ENCODE measurements at regions of chr1 and their contacts with region 1.

Region 1: DNA sequence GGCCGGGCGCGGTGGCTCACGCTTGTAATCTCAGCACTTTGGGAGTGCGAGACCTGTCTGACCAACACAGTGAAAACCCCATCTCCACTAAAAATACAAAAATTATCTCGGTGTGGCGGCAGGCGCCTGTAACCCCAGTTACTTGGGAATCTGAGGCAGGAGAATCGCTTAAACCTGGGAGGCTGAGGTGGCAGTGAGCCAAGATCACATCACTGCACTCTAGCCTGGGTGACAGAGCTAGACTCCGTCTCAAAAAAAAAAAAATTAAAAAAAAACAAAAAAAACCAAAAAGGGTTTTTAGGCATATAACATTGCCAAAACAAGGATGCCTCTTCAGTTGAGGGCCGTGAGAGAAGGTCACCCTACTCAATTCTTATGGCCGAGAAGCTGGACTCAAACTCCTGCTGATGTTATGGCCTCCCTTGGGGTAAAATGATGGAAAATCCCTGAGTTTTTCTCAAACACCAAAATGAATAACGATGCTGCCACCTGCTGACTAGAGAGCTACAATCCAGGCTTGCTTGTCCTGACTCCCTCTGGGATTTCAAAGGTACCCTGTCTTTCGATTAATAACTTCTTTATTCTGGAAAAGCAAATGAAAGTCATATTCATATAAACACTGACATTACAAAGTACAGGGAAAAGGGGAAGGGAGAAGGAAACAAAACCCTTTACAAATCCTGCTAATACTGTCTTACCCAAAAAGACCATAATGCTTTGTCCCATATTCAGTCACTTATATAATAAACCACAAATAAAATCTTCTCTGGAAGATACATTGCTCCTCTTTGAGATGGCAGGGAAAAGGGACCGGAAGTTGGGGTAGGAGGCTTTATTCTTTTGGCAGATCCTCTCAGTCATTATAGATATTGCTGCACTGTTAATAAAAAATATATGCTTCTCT is 10.7 kb downstream of the RAB42 start:
- DNase-seq: peak in 2 of 3 donors; percentile 53 to 67
- ATAC-seq: peak; percentile 72 to 78
- H3K4me3 ChIP-seq: no peak overlapping the region
- H3K27ac ChIP-seq: no peak overlapping the region
- H3K4me1 ChIP-seq: no peaks in the 10 kb centered on the region
- H3K27me3 ChIP-seq: no peaks in the 10 kb centered on the region

Region 2: DNA sequence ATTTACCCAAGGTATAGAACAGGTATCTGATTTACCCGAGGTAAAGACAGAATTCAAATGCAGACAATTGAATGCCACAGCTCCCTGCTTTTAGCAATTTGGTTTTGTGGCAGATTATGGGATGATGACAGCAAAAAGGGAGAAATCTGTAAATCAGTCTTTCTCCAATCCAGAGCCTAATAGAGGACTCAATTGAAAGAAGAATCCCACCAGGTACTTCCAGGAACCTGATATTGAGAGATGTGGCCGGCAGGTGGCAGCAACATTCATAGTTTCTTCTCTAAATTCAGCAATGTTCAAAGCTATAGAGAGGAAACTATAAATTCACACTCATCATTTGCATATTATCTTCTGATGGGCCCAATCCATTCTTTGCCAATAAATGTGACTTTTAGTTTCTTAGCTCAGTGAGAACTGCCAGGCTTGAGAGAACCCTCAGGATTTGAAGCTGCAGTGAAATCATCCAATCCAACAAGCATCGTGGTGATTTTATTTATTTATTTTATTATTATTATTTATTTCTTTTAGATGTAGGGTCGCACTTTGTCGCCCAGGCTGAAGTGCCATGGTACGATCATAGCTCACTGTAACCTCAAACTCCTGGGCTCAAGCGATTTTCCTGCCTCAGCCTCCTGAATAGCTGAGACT is 243.1 kb before region 1 on chr1:
- intact Hi-C with region 1: loop called in 2 of 4 experiments (anchors 10 kb)
- DNase-seq: peak; percentile 67 to 90 (median 78)
- ATAC-seq: peak in 1 of 2 donors; percentile 36
- H3K4me3 ChIP-seq: no peak overlapping the region
- H3K27ac ChIP-seq: no peak overlapping the region
- H3K4me1 ChIP-seq: no peaks in the 10 kb centered on the region
- H3K27me3 ChIP-seq: no peaks in the 10 kb centered on the region

Region 3: DNA sequence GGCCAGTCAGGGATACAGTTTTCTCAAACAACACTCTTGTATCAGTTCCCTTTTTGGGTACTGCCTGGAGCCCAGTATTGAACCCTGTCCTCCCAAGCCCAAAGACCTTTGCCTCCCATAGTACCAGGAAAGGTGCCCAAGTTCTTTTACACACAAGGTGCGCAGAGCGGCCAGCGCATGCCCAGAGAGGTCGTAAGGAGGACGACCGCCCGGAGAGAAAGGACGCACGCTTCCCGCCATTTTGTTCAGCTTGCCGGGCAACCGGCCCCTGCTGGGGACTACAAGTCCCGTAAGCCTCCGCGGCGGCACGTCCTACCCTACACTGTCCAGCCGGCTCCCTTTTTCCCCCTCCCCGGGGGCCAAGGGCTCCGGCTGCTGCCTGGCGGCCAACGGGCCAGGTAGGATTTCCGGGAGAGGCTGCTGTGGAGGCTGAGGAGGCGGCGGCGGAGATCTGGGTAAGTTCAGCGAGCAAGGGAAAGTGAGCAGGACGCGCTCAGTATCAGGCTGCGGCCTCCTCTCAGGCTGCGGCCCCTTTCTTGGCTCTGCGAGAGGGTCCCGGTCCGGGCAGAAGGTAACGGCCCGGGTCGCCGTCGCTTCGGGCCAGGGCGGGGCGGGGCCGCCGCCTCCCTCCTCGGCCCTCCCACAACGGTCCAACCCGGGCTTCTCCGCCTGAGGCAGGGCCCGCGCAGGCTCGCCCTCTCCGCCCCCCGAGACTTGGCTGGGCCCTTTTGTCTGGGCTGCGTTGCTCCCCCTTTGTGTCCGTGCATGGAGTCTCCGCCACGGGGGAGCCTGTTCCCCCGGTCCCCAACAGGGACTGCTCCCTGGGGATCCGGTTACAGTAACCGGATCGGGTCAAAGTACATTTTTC is 233.2 kb before region 1 on chr1 and contains the start of gene PHACTR4:
- intact Hi-C with region 1: loop called in 1 of 4 experiments (anchors 10 kb)
- DNase-seq: peak; percentile 93 to 97 (median 96)
- ATAC-seq: peak; percentile 98
- H3K4me3 ChIP-seq: peak within 1 kb of the TSS; percentile 97
- H3K27ac ChIP-seq: peak within 1 kb of the TSS; percentile 99
- H3K4me1 ChIP-seq: peaks cover 3% of the 10 kb centered on the region
- H3K27me3 ChIP-seq: no peaks in the 10 kb centered on the region
- total RNA-seq, gene PHACTR4: 18.6 to 27.4 (median 22.4) TPM

Region 4: DNA sequence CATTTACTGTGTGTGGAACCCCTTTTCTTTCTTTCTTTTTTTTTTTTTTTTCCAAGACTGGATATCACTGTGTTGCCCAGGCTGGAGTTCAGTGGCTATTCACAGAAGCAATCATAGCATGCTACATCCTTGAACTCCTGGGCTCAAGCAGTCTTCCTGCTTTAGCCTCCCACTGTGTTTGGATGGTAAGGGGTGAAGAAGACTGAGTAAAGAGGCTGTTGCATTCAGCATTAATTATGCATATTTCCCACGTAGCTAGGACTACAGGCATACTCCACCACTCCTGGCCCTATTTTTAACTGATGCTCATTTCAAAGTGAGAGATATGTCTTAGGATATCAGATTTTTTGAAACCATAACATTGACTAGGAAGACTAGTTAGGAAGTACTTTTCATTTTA is 193.7 kb before region 1 on chr1:
- intact Hi-C with region 1: loop called in 1 of 4 experiments (anchors 10 kb)
- DNase-seq: no peak
- ATAC-seq: no peak
- H3K4me3 ChIP-seq: no peak overlapping the region
- H3K27ac ChIP-seq: no peak overlapping the region
- H3K4me1 ChIP-seq: no peaks in the 10 kb centered on the region
- H3K27me3 ChIP-seq: no peaks in the 10 kb centered on the region

Region 5: GRCh38 chr1:28494737-28495136 is 108.1 kb before region 1 on chr1:
- intact Hi-C with region 1: no loop called
- DNase-seq: no peak
- ATAC-seq: no peak
- H3K4me3 ChIP-seq: no peak overlapping the region
- H3K27ac ChIP-seq: no peak overlapping the region
- H3K4me1 ChIP-seq: no peaks in the 10 kb centered on the region
- H3K27me3 ChIP-seq: no peaks in the 10 kb centered on the region

Region 6: GRCh38 chr1:28518000-28518744 is 84.6 kb before region 1 on chr1:
- intact Hi-C with region 1: loop called (anchors 5 to 10 kb)
- DNase-seq: peak; percentile 91 to 97 (median 96)
- ATAC-seq: peak; percentile 90 to 95
- H3K4me3 ChIP-seq: peak overlapping the region; percentile 71
- H3K27ac ChIP-seq: peak overlapping the region; percentile 74
- H3K4me1 ChIP-seq: peaks cover 4% of the 10 kb centered on the region
- H3K27me3 ChIP-seq: no peaks in the 10 kb centered on the region

Region 7: GRCh38 chr1:28668191-28668955 is 65.6 kb after region 1 on chr1 and contains the start of gene GMEB1:
- intact Hi-C with region 1: no loop called
- DNase-seq: peak; percentile 89 to 96 (median 96)
- ATAC-seq: peak; percentile 90
- H3K4me3 ChIP-seq: peak within 1 kb of the TSS; percentile 99
- H3K27ac ChIP-seq: peak within 1 kb of the TSS; percentile 99
- H3K4me1 ChIP-seq: peaks cover 3% of the 10 kb centered on the region
- H3K27me3 ChIP-seq: no peaks in the 10 kb centered on the region
- total RNA-seq, gene GMEB1: 6.9 to 7.7 (median 7.3) TPM

Measured in right cardiac atrium (tissue), 5 donors.